ENCODE measurements at regions of chr10 and their contacts with region 1.

Region 1: DNA sequence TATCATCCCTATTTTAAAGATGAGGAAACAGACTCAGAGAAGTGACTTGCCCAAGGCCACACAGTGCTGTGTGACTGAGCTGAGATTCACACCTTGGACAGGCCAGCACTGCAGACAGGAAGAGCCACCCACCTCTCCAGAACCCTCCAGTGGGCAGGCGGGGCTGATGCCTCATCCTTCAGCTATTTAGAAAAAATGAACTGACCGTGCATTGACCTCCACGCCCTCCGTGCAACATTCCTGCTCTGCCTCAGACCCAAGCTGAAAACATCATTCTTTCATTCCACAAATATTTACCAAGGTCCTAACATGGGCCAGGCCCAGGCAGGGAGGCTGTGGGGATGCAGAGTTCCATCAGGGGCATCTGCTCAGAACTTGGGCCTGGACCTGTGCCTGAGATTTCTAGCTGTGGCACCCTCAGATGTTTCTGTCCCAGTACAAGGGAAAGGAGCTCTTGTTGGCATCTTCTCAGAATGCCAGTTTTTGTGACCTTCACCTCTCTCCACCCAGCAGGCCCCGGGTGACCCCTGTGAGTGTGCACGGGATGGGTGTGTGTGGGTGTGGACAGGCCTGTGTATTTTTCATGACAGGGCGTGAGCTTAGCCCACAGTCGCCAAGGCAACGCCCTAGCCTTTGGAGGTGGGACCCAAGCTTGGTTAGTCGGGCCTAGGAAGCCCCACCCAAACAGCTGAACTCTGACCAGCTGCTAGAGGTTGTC is 6.5 kb downstream of the VSIR start:
- DNase-seq: peak; percentile 70
- ATAC-seq: no peak
- H3K4me3 Mint-ChIP-seq: no peak overlapping the region
- H3K27ac Mint-ChIP-seq: peak overlapping the region; percentile 90
- H3K4me1 Mint-ChIP-seq: peaks cover 61% of the 10 kb centered on the region
- H3K27me3 Mint-ChIP-seq: no peaks in the 10 kb centered on the region

Region 2: DNA sequence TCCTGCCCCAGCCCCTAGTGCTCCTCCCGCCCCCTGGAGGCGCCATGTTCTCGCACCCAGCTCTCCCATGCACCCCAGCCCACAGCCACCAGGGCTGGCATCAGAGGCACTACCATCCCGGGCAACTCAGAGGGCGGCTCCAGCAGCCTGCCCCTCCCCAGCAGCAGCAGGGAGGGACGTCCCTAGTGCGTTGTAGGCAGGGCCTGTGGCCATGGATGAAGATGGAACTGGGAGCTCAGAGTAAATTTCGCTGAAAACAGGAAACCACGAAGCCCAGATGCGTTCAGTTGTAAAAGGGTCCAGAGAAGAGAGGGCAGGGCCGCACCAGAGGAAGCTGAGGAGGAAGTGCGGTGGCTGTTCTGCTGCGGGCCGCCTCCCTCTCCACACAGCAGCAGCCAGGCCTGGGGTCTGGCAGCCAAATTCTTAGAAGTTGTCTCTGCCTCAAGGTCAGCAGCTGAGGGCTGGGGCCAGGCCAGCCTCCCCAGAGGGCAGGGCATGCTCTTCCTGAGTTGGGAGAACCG is 18.1 kb before region 1 on chr10:
- CTCF ChIA-PET with region 1: interaction called, 35 read pairs
- DNase-seq: peak; percentile 95
- ATAC-seq: peak; percentile 85
- H3K4me3 Mint-ChIP-seq: peak overlapping the region; percentile 56
- H3K27ac Mint-ChIP-seq: peak overlapping the region; percentile 97
- H3K4me1 Mint-ChIP-seq: peaks cover 94% of the 10 kb centered on the region
- H3K27me3 Mint-ChIP-seq: no peaks in the 10 kb centered on the region

Region 3: DNA sequence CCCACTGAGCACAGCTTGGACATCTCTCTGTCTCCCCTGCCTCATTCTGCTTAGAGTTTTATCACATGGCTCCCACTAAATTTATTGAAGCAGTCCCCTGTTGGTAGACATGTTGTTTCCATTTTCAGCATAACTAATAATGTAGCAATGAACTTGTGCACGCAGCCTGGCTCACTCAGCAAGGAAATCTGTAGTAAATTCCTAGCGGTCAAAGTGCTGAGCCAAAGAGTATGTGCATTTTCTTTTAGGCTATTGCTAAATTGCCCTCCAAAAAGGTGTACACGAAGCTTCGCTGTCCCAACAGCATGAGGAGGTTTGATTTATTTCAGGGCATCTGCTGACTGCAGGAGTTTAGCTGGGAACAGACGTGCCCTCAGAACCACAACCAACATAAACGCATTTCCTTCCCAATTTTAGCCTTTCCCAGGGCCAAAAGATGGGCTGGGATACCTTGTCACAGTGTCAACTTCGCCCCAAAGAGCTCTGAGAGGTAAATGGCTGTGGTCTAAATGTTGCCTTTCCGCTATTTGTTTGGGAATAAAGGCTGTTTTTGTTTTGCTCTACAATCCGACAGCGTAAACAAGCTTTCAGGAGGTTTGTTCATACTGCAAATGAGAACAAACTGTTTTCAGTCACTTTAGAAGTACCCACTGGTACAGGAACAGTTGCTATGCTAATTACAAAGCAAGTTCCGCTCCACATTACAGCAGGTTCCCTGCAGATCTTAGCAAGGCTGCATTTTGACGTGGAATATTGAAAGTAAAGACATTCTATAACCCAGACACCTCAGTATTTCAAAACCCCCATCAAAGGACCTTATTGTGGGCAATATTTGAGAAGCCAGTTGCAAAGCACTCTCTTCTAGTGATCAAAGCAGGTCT is 10.3 kb before region 1 on chr10:
- CTCF ChIA-PET with region 1: interaction called, 26 read pairs
- DNase-seq: no peak
- ATAC-seq: peak; percentile 52
- H3K4me3 Mint-ChIP-seq: peak overlapping the region; percentile 55
- H3K27ac Mint-ChIP-seq: peak overlapping the region; percentile 88
- H3K4me1 Mint-ChIP-seq: peaks cover 69% of the 10 kb centered on the region
- H3K27me3 Mint-ChIP-seq: no peaks in the 10 kb centered on the region

Region 4: GRCh38 chr10:71782917-71783490 is 16.1 kb after region 1 on chr10:
- CTCF ChIA-PET with region 1: no interaction called
- DNase-seq: no peak
- ATAC-seq: no peak
- H3K4me3 Mint-ChIP-seq: no peak overlapping the region
- H3K27ac Mint-ChIP-seq: no peak overlapping the region
- H3K4me1 Mint-ChIP-seq: peaks cover 13% of the 10 kb centered on the region
- H3K27me3 Mint-ChIP-seq: no peaks in the 10 kb centered on the region

Measured in activated CD8-positive, alpha-beta memory T cell treated with anti-CD3 and anti-CD28 coated beads, Interleukin-2, amount 10 ng/mL, durations not matched to agents 7 days and 5 days (primary cell).